Ovary (tissue), 10 donors: ENCODE measurements at regions of chr6 and their contacts with region 1.

Region 1: GRCh38 chr6:2931970-2932748 is 29.1 kb upstream of the SERPINB9 start:
- DNase-seq: peak; percentile 67 to 78 (median 77)
- H3K4me3 ChIP-seq: no peak overlapping the region
- H3K27ac ChIP-seq: no peak overlapping the region
- H3K4me1 ChIP-seq: peaks cover 2% of the 10 kb centered on the region
- H3K27me3 ChIP-seq: no peaks in the 10 kb centered on the region
- CTCF ChIP-seq: peak; percentile 78 to 87 (median 84)
- EP300 ChIP-seq: no peak
- POLR2A ChIP-seq: no peak

Region 2: GRCh38 chr6:2738373-2738979 is 193.7 kb before region 1 on chr6:
- intact Hi-C with region 1: no loop called
- DNase-seq: peak in 2 of 5 donors; percentile 30 to 38
- H3K4me3 ChIP-seq: no peak overlapping the region
- H3K27ac ChIP-seq: no peak overlapping the region
- H3K4me1 ChIP-seq: no peaks in the 10 kb centered on the region
- H3K27me3 ChIP-seq: no peaks in the 10 kb centered on the region
- CTCF ChIP-seq: peak in 2 of 3 donors; percentile 9 to 38
- EP300 ChIP-seq: no peak
- POLR2A ChIP-seq: no peak

Region 3: DNA sequence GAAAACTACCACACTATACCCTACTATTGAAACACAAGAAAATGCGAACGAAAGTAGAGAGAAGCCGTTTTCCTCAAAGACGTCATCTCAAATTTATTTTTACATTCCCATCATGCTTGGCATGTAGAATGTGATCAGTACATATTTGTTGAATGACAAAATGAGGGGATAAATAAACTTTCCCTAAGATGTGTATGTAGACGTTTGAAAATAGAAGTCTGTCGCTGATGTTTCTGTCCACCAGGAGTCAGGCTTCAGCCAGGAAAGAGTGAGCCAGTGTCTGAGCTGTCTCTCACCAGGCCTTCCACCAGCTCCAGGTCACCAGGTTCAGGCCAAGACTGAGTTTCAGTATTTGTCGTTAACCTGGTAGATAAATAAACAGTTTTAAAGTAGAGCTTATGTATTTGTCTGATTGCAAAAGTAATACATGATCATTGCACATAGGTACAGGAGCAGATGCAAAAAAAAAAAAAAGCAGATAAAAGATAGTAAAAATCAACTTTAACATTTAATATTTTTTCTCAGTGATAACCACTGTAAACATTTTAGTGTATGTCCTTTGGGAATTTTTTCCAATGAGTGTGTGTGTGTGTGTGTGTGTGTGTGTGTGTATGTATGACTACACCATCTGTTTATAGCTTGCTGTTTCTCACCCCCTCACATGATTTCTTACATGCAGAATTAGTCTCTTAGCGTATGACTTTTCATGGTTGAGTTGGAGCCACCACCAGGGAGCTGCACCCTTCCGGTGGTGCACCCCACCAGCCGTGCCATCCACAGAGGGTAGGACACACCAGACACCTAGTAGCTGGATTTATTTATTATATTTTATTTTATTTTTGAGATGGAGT is 140.8 kb before region 1 on chr6:
- intact Hi-C with region 1: loop called in 2 of 4 experiments (anchors 5 kb)
- DNase-seq: peak; percentile 39 to 67 (median 43)
- H3K4me3 ChIP-seq: no peak overlapping the region
- H3K27ac ChIP-seq: no peak overlapping the region
- H3K4me1 ChIP-seq: peaks cover 1% of the 10 kb centered on the region
- H3K27me3 ChIP-seq: no peaks in the 10 kb centered on the region
- CTCF ChIP-seq: peak; percentile 17 to 63 (median 54)
- EP300 ChIP-seq: no peak
- POLR2A ChIP-seq: no peak

Region 4: DNA sequence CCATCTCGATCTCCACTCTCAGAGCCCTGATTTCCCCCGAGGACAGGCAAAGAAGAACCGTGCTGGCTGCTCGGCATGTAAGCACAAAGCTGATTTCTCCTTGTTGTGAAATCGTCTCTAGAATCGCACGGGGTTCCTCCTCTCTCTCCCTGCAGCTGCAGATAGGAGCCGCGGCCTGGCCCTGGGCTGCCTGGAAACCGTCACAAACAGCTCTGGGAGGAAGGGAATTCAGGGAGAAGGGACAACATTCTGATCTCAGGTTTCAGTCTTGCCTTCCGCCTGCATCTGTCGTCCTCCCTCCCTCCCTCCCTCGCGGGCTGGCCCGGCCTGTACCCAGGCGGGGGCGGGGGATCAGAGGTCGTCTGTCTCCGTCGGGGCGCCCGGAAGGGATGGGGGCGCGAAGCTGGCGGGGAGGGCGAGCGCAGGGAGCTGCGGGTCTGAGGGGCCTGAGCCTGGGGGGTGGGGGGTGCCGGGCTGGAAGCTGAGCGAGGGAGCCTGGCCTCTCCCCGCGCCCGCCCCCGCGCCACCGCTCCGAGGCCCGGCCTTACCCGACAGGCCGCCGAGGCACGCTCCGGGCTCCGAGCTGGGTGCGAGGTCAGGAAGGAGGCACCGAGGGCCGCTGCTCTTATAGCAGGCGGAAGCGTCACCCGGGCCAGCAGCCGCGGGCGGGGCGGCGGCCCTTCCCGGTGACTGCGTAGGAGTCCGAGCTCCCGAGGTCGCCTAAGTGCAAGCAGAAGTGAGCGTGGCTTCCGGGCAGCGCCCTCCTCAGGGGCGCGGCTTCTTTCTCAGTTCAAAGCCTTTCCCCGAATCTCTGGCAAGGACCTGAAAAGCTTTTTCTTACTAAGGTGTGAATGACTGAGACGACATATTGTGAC is 90.7 kb before region 1 on chr6 and contains the start of gene SERPINB1:
- intact Hi-C with region 1: loop called (anchors 2 to 5 kb)
- DNase-seq: peak; percentile 75 to 83 (median 82)
- H3K4me3 ChIP-seq: peak within 1 kb of the TSS; percentile 69
- H3K27ac ChIP-seq: peak within 1 kb of the TSS; percentile 75 to 89
- H3K4me1 ChIP-seq: peaks cover 7% of the 10 kb centered on the region
- H3K27me3 ChIP-seq: no peaks in the 10 kb centered on the region
- CTCF ChIP-seq: no peak
- EP300 ChIP-seq: peak; percentile 84
- POLR2A ChIP-seq: peak; percentile 46
- total RNA-seq, gene SERPINB1: 13.5 to 38.1 (median 27.7) TPM

Region 5: DNA sequence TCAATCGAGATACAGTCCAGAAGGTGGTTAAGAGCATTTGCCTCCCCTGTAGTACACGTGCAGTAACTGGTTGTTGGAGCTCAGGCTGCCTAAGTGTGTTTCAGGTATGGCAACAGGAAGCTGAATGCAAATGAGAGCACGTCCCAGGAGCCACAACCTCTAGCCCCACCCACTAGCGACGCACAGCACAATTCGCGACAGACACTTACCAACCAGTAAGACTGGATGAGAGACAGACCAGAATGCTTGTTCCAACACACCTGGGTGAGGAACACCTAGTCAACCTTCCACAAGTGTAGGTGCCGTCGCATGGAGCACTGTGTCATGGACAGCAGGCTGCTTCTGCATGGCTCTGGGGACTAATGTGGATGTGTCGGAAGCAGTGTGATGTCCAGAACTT is 83.3 kb before region 1 on chr6:
- intact Hi-C with region 1: loop called (anchors 2 to 5 kb)
- DNase-seq: no peak
- H3K4me3 ChIP-seq: no peak overlapping the region
- H3K27ac ChIP-seq: no peak overlapping the region
- H3K4me1 ChIP-seq: peaks cover 3% of the 10 kb centered on the region
- H3K27me3 ChIP-seq: no peaks in the 10 kb centered on the region
- CTCF ChIP-seq: no peak
- EP300 ChIP-seq: no peak
- POLR2A ChIP-seq: no peak